ENCODE measurements at regions of chr4 and their contacts with region 1.

Region 1: DNA sequence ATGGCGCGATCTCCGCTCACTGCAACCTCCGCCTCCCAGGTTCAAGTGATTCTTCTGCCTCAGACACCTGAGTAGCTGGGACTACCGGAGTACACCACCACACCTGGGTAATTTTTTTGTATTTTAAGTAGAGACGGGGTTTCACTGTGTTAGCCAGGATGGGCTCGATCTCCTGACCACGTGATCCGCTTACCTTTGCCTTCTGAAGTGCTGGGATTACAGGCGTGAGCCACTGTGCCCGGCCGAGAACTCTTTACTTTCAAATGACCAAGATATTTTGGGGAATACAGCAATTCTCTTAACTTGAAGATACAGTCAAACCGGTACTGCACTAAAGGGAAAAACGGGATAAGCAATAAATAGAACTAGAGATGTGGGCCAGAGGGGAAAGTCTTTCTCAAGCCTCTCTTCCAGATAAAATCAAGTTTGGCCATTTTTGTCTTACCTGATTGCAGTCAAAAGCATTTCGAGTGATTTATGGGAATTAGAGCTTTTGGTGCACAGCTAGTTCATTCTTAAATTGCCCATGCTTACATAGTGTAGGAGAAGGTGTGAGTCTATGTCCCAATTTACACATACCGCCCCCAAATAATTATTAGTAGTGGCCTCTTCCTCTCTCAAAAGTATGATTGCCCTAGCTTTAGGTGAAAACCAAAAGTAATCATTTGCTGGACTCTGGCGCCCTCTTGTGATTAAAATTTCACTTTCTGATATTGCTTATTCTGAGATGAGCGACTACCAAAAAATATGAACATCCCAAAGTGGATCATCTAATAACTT is 53.2 kb upstream of the ABCG2 start:
- DNase-seq: no peak
- H3K4me3 ChIP-seq: no peak overlapping the region
- H3K27ac ChIP-seq: no peak overlapping the region
- H3K4me1 ChIP-seq: peaks cover 0 to 6% (median 0%) of the 10 kb centered on the region in 6 donors
- H3K27me3 ChIP-seq: no peaks in the 10 kb centered on the region
- CTCF ChIP-seq: peak; percentile 35 to 79 (median 66)
- POLR2A ChIP-seq: no peak

Region 2: DNA sequence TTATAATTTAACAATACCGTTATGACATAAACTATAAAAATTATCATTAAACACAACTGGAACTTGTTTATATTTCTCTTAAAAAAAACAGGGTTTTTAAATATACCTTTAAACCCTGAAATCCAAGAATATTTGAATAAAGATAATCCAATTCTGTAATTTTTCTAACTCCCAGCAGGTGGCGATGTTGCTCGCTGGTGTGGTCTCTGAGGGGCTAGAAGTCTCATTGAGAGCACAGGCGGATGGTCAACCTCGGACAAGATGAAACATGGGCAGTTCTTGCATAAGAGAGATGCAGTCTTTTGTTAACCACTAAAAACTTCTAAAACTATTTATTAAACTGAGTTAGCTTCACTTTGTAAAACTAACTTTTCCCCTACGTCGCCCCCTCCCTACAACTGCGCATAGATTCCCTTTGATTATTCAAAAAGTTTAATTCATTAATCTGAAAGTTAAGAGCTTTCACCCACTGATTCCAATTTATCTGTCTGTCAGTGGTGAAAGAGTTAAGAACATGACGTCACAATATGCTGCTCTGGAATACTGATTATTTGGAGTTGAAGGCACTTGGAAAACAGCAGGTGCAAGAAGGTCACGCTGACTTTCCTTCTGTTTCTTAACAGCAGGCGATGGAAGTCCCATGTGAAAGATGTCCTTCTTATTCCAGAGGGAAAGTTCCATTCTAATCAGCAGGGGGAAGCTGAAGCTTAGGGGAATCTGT is 532.1 kb before region 1 on chr4:
- intact Hi-C with region 1: loop called (anchors 5 kb)
- DNase-seq: no peak
- H3K4me3 ChIP-seq: no peak overlapping the region
- H3K27ac ChIP-seq: no peak overlapping the region
- H3K4me1 ChIP-seq: peaks cover 0 to 10% (median 0%) of the 10 kb centered on the region in 6 donors
- H3K27me3 ChIP-seq: no peaks in the 10 kb centered on the region
- CTCF ChIP-seq: peak; percentile 22 to 65 (median 62)
- POLR2A ChIP-seq: no peak

Region 3: DNA sequence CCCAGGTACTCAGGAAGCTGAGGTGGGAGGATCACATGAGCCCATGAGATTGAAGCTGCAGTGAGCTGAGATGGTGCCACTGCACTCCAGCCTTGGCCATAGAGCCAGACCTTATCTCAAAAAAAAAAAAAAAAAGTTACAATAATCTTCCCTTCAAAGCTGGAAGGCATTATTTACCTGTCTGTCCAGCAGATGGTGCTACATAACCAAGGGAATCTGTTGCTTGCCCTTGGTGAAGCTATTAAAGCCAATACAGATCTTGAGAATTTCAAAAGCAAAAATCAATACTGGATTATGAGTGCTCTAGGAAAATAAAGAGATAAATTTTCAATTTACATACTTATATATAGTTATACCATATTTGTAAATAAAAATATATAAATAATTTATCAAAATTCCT is 178.4 kb before region 1 on chr4:
- intact Hi-C with region 1: loop called (anchors 5 kb)
- DNase-seq: no peak
- H3K4me3 ChIP-seq: no peak overlapping the region
- H3K27ac ChIP-seq: no peak overlapping the region
- H3K4me1 ChIP-seq: peaks cover 0 to 8% (median 0%) of the 10 kb centered on the region in 6 donors
- H3K27me3 ChIP-seq: no peaks in the 10 kb centered on the region
- CTCF ChIP-seq: peak; percentile 46 to 79 (median 67)
- POLR2A ChIP-seq: no peak

Region 4: GRCh38 chr4:88320780-88321373 is 109.2 kb after region 1 on chr4:
- intact Hi-C with region 1: no loop called
- DNase-seq: peak; percentile 81
- H3K4me3 ChIP-seq: peak overlapping the region in 1 of 8 donors; percentile 23
- H3K27ac ChIP-seq: peak overlapping the region; percentile 43 to 85 (median 70)
- H3K4me1 ChIP-seq: peaks cover 4 to 27% (median 21%) of the 10 kb centered on the region in 6 donors
- H3K27me3 ChIP-seq: no peaks in the 10 kb centered on the region
- CTCF ChIP-seq: no peak
- POLR2A ChIP-seq: no peak